IMR-90 (cell line): ENCODE measurements at regions of chr7 and their contacts with region 1.

Region 1: GRCh38 chr7:88615336-88615735 is 144.2 kb upstream of the ZNF804B start:
- DNase-seq: no peak
- ATAC-seq: no peak
- H3K4me3 ChIP-seq: no peak overlapping the region
- H3K27ac ChIP-seq: no peak overlapping the region
- H3K4me1 ChIP-seq: no peaks in the 10 kb centered on the region
- H3K27me3 ChIP-seq: no peaks in the 10 kb centered on the region
- CTCF ChIP-seq: no peak
- POLR2A ChIP-seq: no peak
- RAD21 ChIP-seq: no peak

Region 2: GRCh38 chr7:88576720-88577119 is 38.6 kb before region 1 on chr7:
- CTCF ChIA-PET with region 1: no interaction called
- POLR2A ChIA-PET with region 1: no interaction called
- dilution Hi-C with region 1: no loop called
- in situ Hi-C with region 1: no loop called
- intact Hi-C with region 1: loop called (anchors 2 kb)
- DNase-seq: no peak
- ATAC-seq: no peak
- H3K4me3 ChIP-seq: no peak overlapping the region
- H3K27ac ChIP-seq: no peak overlapping the region
- H3K4me1 ChIP-seq: no peaks in the 10 kb centered on the region
- H3K27me3 ChIP-seq: no peaks in the 10 kb centered on the region
- CTCF ChIP-seq: no peak
- POLR2A ChIP-seq: no peak
- RAD21 ChIP-seq: no peak

Region 3: GRCh38 chr7:88589927-88590326 is 25.4 kb before region 1 on chr7:
- CTCF ChIA-PET with region 1: no interaction called
- POLR2A ChIA-PET with region 1: no interaction called
- dilution Hi-C with region 1: no loop called
- in situ Hi-C with region 1: no loop called
- intact Hi-C with region 1: no loop called
- DNase-seq: no peak
- ATAC-seq: no peak
- H3K4me3 ChIP-seq: no peak overlapping the region
- H3K27ac ChIP-seq: no peak overlapping the region
- H3K4me1 ChIP-seq: no peaks in the 10 kb centered on the region
- H3K27me3 ChIP-seq: no peaks in the 10 kb centered on the region
- CTCF ChIP-seq: no peak
- POLR2A ChIP-seq: no peak
- RAD21 ChIP-seq: no peak